CD8-positive, alpha-beta T cell (primary cell): ENCODE measurements at regions of chr17 and their contacts with region 1.

Region 1: GRCh38 chr17:19464031-19465026 is 53.3 kb downstream of the RNF112 start:
- DNase-seq: no peak
- ATAC-seq: no peak
- H3K4me3 ChIP-seq: no peak overlapping the region
- H3K4me3 Mint-ChIP-seq: no peak overlapping the region
- H3K27ac ChIP-seq: peak overlapping the region in 1 of 2 experiments; percentile 61
- H3K27ac Mint-ChIP-seq: peak overlapping the region; percentile 82
- H3K4me1 ChIP-seq: peaks cover 31% of the 10 kb centered on the region
- H3K4me1 Mint-ChIP-seq: peaks cover 36% of the 10 kb centered on the region
- H3K27me3 ChIP-seq: no peaks in the 10 kb centered on the region
- H3K27me3 Mint-ChIP-seq: no peaks in the 10 kb centered on the region
- CTCF ChIP-seq: no peak

Region 2: GRCh38 chr17:19384701-19385411 is 79.5 kb before region 1 on chr17:
- CTCF ChIA-PET with region 1: no interaction called
- POLR2A ChIA-PET with region 1: no interaction called
- intact Hi-C with region 1: no loop called
- DNase-seq: no peak
- ATAC-seq: no peak
- H3K4me3 ChIP-seq: no peak overlapping the region
- H3K4me3 Mint-ChIP-seq: no peak overlapping the region
- H3K27ac ChIP-seq: no peak overlapping the region
- H3K27ac Mint-ChIP-seq: no peak overlapping the region
- H3K4me1 ChIP-seq: no peaks in the 10 kb centered on the region
- H3K4me1 Mint-ChIP-seq: peaks cover 9% of the 10 kb centered on the region
- H3K27me3 ChIP-seq: no peaks in the 10 kb centered on the region
- H3K27me3 Mint-ChIP-seq: peaks cover 2% of the 10 kb centered on the region
- CTCF ChIP-seq: no peak

Region 3: DNA sequence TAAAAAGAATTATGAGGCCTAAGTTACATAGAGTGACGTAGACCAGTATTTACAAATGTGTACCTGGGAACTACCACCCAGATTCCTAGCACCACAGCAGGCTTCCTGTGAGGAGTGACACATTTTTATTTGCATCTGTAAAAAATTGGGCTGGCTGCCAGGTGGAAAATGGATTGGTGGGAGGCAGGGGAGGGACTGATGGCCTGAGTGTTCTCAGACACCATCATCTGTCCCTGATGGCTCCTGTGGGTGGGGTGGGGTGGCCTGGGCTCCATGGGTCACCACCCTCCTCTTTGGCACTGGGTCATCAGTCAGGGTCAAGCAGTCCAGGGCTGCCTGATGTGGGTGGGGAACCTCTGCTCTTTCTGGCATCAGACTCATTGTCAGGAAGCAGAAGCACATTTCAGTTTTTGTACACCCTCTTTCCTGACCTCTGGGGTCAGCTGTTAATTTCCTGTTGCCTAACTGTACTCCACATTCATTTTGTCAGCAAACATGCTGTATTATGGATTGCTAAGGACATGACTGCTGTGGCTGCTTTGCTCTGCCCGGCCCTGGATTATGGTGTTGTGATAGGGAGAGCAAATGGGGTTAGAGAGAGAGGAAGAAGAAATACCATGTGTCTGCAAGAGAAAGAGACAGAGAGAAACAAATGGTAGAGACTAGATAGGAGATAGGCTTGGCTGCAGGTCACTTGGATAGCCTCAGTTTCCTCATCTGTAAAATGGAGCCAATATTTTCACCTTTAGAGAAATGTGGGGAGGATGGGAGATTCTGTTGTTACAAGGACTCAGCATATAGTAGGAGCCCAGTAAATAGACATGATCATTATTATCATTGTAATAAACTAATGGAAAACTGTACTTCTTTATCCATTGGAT is 65.8 kb before region 1 on chr17:
- CTCF ChIA-PET with region 1: no interaction called
- POLR2A ChIA-PET with region 1: no interaction called
- intact Hi-C with region 1: no loop called
- DNase-seq: no peak
- ATAC-seq: no peak
- H3K4me3 ChIP-seq: no peak overlapping the region
- H3K4me3 Mint-ChIP-seq: no peak overlapping the region
- H3K27ac ChIP-seq: no peak overlapping the region
- H3K27ac Mint-ChIP-seq: no peak overlapping the region
- H3K4me1 ChIP-seq: no peaks in the 10 kb centered on the region
- H3K4me1 Mint-ChIP-seq: no peaks in the 10 kb centered on the region
- H3K27me3 ChIP-seq: no peaks in the 10 kb centered on the region
- H3K27me3 Mint-ChIP-seq: peaks cover 6% of the 10 kb centered on the region
- CTCF ChIP-seq: no peak

Region 4: DNA sequence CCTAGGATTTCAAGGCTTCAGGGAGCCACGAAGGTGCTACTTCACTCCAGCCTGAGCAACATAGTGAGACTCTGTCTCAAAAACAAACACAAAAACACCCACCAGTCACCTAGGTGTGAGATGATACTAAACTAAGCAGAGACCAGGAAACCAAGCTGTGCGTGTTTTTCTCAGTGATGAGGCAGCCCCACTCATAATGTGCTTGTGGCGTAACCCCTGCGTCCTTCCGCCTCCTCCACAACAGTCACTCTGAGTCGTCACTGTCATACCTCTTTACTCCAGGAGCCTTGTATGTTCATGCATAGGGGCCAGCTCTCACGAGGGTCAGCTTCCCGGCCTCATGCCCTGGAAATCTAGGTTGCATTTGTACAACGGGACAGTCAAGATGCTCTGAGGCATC is 38.2 kb after region 1 on chr17:
- CTCF ChIA-PET with region 1: no interaction called
- POLR2A ChIA-PET with region 1: no interaction called
- intact Hi-C with region 1: loop called in 1 of 2 experiments (anchors 5 kb)
- DNase-seq: peak; percentile 7 to 80 (median 32)
- ATAC-seq: peak; percentile 85
- H3K4me3 ChIP-seq: no peak overlapping the region
- H3K4me3 Mint-ChIP-seq: no peak overlapping the region
- H3K27ac ChIP-seq: peak overlapping the region; percentile 29 to 49
- H3K27ac Mint-ChIP-seq: peak overlapping the region; percentile 60
- H3K4me1 ChIP-seq: no peaks in the 10 kb centered on the region
- H3K4me1 Mint-ChIP-seq: peaks cover 5% of the 10 kb centered on the region
- H3K27me3 ChIP-seq: no peaks in the 10 kb centered on the region
- H3K27me3 Mint-ChIP-seq: peaks cover 2% of the 10 kb centered on the region
- CTCF ChIP-seq: no peak